ENCODE measurements at regions of chr11 and their contacts with region 1.

Region 1: DNA sequence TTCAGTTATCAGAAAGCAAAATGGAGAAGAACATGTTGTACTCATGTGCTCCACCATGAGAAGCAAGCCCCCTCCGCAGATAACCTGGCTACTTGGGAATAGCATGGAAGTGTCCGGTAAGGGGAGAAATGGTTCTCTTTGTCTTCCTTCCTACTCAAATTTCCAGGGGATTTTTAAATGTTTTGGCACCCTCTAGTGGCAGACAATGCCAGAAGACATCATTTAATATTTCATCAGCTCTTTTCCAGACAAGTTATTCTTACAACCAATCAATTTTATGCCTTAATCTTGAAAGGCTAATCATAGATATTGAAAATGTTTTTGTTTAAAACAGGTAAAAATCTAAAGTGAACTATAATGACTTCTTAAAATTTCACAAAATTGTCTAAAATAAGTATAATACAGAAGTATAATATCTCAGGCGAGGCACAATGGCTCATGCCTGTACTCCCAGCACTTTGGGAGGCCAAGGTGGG is 15.7 kb downstream of the CRTAM start:
- DNase-seq: no peak
- H3K4me3 ChIP-seq: no peak overlapping the region
- H3K27me3 ChIP-seq: no peaks in the 10 kb centered on the region
- CTCF ChIP-seq: peak; percentile 59

Region 2: GRCh38 chr11:121358760-121359159 is 1495.2 kb before region 1 on chr11:
- CTCF ChIA-PET with region 1: no interaction called
- POLR2A ChIA-PET with region 1: no interaction called
- DNase-seq: no peak
- H3K4me3 ChIP-seq: no peak overlapping the region
- H3K27me3 ChIP-seq: no peaks in the 10 kb centered on the region; the same call in 1 of the 2 replicates
- CTCF ChIP-seq: no peak

Region 3: GRCh38 chr11:122628810-122629555 is 225.0 kb before region 1 on chr11:
- CTCF ChIA-PET with region 1: interaction called, 84 read pairs
- POLR2A ChIA-PET with region 1: no interaction called
- DNase-seq: no peak
- H3K4me3 ChIP-seq: no peak overlapping the region
- H3K27me3 ChIP-seq: peaks cover 5% of the 10 kb centered on the region
- CTCF ChIP-seq: peak; percentile 93

Region 4: DNA sequence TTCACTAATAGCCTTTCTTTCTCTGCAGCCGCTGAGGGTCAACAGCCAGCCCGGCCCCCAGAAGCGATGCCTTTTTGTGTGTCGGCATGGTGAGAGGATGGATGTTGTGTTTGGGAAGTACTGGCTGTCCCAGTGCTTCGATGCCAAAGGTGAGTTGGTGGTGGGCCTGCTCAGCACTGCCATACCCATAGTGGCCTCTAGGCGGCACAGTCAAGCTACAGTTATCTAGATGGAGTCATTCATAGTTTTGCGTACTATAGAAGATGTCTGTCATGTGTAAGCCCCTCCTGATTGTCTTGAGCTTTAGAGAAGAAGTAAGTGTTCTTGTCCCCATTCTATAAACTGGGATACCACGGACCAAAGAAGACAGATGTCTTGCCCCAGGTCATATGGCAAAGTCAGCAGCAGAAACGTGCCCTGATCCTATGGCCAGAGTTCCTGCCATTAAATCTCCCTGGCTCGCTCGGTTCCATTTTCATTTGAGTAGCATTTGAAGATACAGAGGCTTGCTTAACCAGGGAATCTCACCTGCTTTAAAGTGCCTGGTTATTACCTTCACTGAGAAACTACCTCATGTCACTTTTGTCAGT is 57.8 kb before region 1 on chr11:
- CTCF ChIA-PET with region 1: interaction called, 114 read pairs
- POLR2A ChIA-PET with region 1: no interaction called
- DNase-seq: no peak
- H3K4me3 ChIP-seq: no peak overlapping the region
- H3K27me3 ChIP-seq: no peaks in the 10 kb centered on the region
- CTCF ChIP-seq: peak; percentile 86

Region 5: DNA sequence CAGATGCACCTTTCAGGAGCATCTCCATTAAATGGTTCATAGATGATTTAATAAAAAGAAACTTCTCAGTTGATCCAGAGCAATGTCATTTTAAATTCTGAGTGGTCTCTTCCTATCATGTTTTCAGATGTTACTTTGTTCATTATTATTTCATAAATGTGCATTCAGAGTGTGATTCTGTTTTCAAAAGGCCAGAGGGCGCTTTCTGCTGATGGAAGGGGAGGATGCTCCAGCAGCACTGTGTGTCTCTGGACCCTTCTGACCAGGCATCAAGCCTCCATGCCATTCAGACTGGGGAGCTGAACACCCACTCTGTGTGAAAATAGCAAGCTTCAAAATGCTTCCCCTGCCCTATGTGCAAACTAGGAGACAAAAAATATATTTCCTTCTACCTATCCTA is 39.6 kb before region 1 on chr11:
- CTCF ChIA-PET with region 1: interaction called, 26 read pairs
- POLR2A ChIA-PET with region 1: no interaction called
- DNase-seq: no peak
- H3K4me3 ChIP-seq: no peak overlapping the region
- H3K27me3 ChIP-seq: no peaks in the 10 kb centered on the region
- CTCF ChIP-seq: no peak

Region 6: GRCh38 chr11:123246749-123247495 is 392.9 kb after region 1 on chr11:
- CTCF ChIA-PET with region 1: no interaction called
- POLR2A ChIA-PET with region 1: no interaction called
- DNase-seq: no peak
- H3K4me3 ChIP-seq: no peak overlapping the region
- H3K27me3 ChIP-seq: no peaks in the 10 kb centered on the region
- CTCF ChIP-seq: peak; percentile 97

Measured in BJ (cell line).